OCI-LY7 (cell line): ENCODE measurements at regions of chr6 and their contacts with region 1.

Region 1: DNA sequence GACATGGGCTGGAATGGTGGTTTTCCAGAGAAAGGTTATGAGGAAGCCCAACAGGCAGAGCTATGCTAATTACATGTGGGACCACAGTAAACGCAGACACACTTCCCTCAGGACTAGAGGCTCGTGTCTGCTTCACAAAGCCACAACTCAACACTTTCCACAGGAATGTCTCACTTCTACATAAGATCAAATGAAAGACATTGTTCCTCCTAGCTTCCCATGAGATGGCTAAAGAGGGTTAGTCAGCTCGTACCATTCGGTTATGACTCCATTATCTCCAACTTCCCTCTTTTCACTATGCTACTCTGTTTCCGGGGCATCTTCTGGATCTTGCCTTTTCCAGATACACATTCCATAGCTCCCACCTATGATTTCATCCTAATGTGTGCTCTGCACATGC is 29.1 kb upstream of the ZC3H12D start:
- DNase-seq: no peak
- H3K4me3 ChIP-seq: no peak overlapping the region
- H3K27ac ChIP-seq: no peak overlapping the region
- H3K4me1 ChIP-seq: no peaks in the 10 kb centered on the region
- CTCF ChIP-seq: no peak

Region 2: GRCh38 chr6:149082286-149082707 is 431.6 kb before region 1 on chr6:
- CTCF ChIA-PET with region 1: no interaction called
- POLR2A ChIA-PET with region 1: no interaction called
- intact Hi-C with region 1: loop called (anchors 2 kb)
- DNase-seq: peak; percentile 77
- H3K4me3 ChIP-seq: no peak overlapping the region
- H3K27ac ChIP-seq: no peak overlapping the region
- H3K4me1 ChIP-seq: no peaks in the 10 kb centered on the region
- CTCF ChIP-seq: peak; percentile 86

Region 3: DNA sequence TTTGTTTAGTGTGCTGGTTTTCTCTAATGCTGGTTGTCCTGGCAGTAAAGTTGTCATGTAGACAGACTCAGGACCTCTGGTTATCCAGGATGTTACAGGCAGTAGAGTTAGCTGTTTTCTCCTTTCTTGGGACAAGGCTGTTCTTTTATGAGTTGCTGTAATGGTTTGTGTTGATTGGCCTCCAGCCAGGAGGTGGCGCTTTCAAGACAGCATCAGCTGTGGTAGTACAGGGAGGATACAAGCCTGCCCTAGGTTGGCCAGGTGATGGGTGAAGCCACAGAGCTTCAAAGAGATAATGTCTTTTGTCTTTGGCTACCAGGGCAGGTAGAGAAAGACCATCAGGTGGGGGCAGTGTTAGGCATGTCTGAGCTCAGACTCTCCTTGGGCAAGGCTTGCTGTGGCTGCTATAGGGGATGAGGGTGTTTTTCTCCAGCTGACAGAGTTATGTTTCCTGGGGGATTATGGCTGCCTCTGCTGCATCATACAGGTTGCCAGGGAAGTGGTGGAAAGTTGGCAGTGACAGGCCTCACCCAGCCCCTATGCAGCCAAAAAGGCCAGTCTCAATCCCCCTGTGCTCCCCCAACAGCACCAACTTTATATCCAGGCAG is 323.6 kb before region 1 on chr6:
- CTCF ChIA-PET with region 1: no interaction called
- POLR2A ChIA-PET with region 1: interaction called, 3 read pairs
- intact Hi-C with region 1: loop called (anchors 2 kb)
- DNase-seq: peak; percentile 63
- H3K4me3 ChIP-seq: no peak overlapping the region
- H3K27ac ChIP-seq: no peak overlapping the region
- H3K4me1 ChIP-seq: no peaks in the 10 kb centered on the region
- CTCF ChIP-seq: peak; percentile 84

Region 4: GRCh38 chr6:149316798-149317655 is 196.9 kb before region 1 on chr6:
- CTCF ChIA-PET with region 1: no interaction called
- POLR2A ChIA-PET with region 1: interaction called, 3 read pairs
- intact Hi-C with region 1: loop called (anchors 10 kb)
- DNase-seq: peak; percentile 94
- H3K4me3 ChIP-seq: peak overlapping the region; percentile 75
- H3K27ac ChIP-seq: peak overlapping the region; percentile 86
- H3K4me1 ChIP-seq: peaks cover 20% of the 10 kb centered on the region
- CTCF ChIP-seq: peak; percentile 46; the same call in 1 of the 2 replicates

Region 5: DNA sequence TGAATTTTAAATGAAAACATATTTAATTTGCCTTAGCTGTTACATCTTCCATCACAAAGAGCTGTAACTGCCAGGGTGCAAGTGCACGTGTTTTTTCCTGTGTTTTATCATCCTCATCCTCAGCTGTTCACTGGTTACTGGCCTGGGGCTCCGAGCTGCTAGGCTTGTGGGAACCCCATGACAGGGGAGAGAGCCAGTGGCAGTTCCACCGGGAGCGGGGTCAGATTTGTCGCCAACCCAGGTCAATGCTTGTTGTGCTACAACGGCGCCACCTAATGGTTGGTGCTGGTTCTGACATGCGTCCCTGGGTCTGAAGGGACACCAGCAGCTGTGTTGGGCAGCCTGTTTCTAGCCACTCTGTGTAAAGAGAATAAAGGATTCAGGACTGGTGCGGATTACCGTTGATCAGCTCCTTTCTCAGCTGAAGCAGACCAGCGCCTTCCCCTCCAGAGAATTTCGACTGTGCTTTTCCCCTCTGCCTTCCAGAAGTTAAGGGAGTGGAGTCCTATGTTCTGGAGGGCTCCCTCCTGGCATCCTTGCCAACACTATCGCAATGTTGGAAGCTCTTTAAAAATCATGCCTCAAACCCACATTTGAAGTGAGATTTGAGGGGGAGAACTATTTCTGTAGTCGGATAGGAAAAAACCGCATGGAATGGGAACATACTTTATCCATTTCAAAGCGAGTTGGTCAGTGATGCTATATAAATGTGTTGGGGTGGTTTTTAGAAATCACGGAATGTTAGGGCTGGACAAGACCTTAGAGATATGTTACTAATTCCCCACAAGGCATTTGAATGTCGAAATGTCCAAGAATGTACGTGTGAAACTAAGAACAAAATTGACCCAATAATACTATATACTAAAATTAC is 81.8 kb before region 1 on chr6:
- CTCF ChIA-PET with region 1: interaction called, 9 read pairs
- POLR2A ChIA-PET with region 1: no interaction called
- intact Hi-C with region 1: loop called (anchors 1 kb)
- DNase-seq: peak; percentile 88
- H3K4me3 ChIP-seq: no peak overlapping the region
- H3K27ac ChIP-seq: no peak overlapping the region
- H3K4me1 ChIP-seq: peaks cover 7% of the 10 kb centered on the region
- CTCF ChIP-seq: peak; percentile 95

Region 6: DNA sequence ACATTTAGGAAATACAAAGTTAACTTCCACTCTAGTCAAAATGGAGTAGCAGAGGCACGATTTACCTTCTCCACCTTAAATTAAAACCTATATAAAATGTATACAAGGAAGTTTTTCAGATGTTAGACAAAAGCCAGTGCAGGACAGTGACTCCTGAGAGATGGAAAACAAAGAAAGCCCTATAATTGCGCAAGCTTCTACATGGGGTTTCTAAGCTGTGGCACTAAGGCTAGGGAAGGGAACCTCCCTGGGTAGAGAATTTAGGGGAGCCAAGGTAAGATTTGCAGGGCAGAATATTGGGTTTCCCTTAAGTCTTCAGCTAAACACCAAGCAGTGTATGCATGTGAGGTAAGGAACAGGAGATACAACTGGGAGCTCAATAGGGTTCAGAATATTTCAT is 10.6 kb before region 1 on chr6:
- CTCF ChIA-PET with region 1: no interaction called
- POLR2A ChIA-PET with region 1: interaction called, 11 read pairs
- intact Hi-C with region 1: no loop called
- DNase-seq: no peak
- H3K4me3 ChIP-seq: no peak overlapping the region
- H3K27ac ChIP-seq: no peak overlapping the region
- H3K4me1 ChIP-seq: no peaks in the 10 kb centered on the region
- CTCF ChIP-seq: no peak